ENCODE measurements at regions of chr9 and their contacts with region 1.

Region 1: DNA sequence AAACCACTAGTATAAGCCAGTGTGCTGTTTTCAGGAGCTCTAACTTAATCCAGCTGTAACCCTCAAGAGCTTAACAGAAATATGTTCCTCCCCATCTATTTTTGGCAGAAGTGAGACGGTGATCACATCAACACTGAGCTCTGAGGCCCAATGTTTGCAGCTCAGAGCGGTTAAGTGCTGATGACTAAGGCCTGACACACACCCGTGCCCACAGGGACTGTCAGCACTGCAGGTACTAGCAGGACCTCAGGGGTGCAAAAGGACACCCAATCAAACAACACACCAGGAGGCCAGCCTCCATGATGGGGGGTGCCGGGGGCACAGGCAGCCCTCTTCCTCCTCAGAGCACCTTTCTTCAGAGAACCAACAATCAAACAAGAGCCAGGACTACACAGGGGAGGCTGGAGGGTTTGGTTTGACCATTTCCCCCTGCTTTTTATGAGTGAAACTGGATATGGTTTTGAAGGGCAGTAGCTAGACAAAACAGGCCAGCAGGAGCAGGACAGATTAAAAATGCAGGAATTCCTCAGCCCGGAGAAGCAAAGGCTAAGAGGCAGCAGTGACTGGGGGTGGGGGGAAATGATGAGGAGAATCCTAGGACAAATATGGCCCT is 61.3 kb downstream of the RAPGEF1 start:
- DNase-seq: peak; percentile 89
- H3K4me3 Mint-ChIP-seq: peak overlapping the region; percentile 46
- H3K27ac Mint-ChIP-seq: peak overlapping the region; percentile 95
- H3K4me1 Mint-ChIP-seq: peaks cover 86% of the 10 kb centered on the region
- H3K27me3 Mint-ChIP-seq: no peaks in the 10 kb centered on the region

Region 2: DNA sequence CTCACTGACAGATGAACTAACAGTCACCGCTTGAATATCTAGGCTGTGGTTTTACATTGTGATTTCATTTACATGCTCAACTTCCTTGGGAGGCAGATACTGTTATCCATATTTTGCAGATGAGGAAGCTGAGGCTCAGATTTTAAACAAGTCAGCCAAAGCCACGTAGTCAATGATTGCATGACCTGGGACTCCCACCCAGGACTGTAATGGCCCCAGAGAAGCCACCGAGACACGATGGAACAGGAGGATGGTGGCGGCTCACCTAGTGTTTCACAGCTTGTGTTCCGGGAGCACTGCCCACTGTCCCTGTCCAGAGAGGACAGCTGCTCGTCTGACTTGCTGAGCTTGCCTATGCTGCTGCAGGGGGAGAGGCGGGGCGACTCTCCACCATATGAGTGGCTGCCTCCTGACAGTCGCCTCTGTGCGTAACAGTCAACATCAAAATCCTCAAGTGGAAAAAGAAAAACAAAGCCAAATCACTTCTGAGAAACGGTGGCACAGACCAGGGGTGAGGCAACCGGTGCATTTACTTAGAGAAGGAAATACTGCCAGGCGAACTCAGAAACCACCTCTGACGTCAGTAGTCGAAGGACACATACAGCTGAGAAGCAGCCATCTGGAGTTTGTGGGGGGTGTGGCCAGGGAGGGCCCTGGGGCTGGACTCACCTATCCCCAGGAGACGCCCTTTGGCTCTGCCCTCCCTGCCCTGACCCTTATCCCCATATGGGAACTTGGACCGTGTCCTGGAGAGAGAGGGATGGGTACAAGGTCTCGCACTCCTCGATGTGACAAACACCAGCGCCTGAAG is 50.8 kb before region 1 on chr9:
- CTCF ChIA-PET with region 1: interaction called, 3 read pairs
- POLR2A ChIA-PET with region 1: interaction called, 27 read pairs
- DNase-seq: peak; percentile 71
- H3K4me3 Mint-ChIP-seq: peak overlapping the region; percentile 14
- H3K27ac Mint-ChIP-seq: peak overlapping the region; percentile 88
- H3K4me1 Mint-ChIP-seq: peaks cover 67% of the 10 kb centered on the region
- H3K27me3 Mint-ChIP-seq: no peaks in the 10 kb centered on the region

Region 3: DNA sequence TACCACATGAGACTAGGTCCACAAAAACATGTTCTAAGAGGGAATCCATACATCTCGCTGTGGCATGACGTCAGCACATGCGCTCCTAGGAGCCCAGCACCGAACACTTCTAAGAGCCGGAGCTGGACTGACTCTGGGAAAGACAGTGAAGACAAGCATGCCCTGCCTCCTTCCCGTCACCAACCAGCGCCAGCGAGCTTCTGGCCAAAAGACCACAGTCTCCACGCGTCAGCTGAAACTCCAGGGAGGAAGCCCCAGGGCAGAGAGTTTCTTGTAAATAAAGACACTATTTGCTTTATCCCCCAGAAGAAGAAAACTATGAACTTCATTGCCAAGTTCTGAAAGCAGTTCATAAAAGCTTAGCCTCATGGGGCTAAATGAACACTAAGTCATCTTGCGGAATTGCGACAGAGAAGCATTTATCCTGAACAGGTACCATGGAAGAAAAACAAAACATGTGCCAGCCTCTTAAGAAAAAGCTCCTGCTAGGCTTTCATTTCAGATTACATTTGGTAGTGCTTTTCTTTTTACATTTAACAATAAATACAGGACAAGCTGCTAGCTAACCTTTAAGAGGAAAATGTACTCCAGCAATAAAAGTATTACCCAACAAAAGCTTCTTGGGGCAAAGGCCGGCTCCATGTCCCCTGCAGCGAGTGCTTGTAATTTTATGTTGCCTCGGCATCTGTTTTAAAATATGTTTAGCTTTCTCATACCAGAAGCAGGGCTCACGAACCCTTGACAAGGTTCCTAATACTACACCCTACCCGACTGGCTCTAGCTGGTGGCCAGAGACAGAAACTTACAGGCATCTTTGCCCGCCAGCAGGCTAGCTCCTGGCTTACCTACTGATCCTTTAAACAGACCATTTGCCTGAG is 36.7 kb before region 1 on chr9:
- CTCF ChIA-PET with region 1: interaction called, 6 read pairs
- POLR2A ChIA-PET with region 1: interaction called, 29 read pairs
- DNase-seq: no peak
- H3K4me3 Mint-ChIP-seq: no peak overlapping the region
- H3K27ac Mint-ChIP-seq: peak overlapping the region; percentile 85
- H3K4me1 Mint-ChIP-seq: peaks cover 60% of the 10 kb centered on the region
- H3K27me3 Mint-ChIP-seq: no peaks in the 10 kb centered on the region

Region 4: GRCh38 chr9:131697097-131697496 is 18.5 kb after region 1 on chr9:
- CTCF ChIA-PET with region 1: interaction called, 14 read pairs
- POLR2A ChIA-PET with region 1: interaction called, 70 read pairs
- DNase-seq: no peak
- H3K4me3 Mint-ChIP-seq: no peak overlapping the region
- H3K27ac Mint-ChIP-seq: no peak overlapping the region
- H3K4me1 Mint-ChIP-seq: peaks cover 69% of the 10 kb centered on the region
- H3K27me3 Mint-ChIP-seq: no peaks in the 10 kb centered on the region

Region 5: DNA sequence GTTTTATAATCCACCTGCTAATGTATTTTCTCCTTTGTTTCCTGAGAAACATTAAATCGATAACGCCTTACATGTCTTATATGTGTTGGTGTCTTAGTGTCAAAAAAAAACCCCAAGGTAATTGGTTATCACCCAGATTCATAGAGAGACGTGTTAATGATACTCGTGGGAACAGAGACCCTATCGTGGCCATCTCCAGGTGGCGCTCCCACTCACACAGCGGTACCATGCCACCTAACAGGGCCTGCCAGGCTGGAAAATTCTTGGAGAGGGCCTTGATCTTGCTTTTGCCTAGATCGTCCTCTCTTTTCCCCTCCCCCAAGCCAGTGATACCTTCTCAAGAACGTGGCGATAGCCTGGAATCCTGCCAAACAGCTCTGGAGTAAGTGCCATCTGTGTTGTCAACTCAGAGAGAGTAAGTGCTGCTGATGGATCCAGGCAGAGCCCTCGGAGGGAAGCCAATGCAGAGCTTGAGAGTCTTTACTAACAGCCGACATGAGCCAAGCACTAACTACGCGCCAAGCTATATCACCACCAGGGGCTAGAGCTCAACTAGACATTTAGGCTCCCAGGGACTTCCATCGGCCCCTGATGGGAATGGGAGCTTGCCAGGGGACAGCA is 43.5 kb after region 1 on chr9:
- CTCF ChIA-PET with region 1: interaction called, 87 read pairs
- POLR2A ChIA-PET with region 1: interaction called, 362 read pairs
- DNase-seq: no peak
- H3K4me3 Mint-ChIP-seq: no peak overlapping the region
- H3K27ac Mint-ChIP-seq: no peak overlapping the region
- H3K4me1 Mint-ChIP-seq: peaks cover 82% of the 10 kb centered on the region
- H3K27me3 Mint-ChIP-seq: no peaks in the 10 kb centered on the region

Region 6: DNA sequence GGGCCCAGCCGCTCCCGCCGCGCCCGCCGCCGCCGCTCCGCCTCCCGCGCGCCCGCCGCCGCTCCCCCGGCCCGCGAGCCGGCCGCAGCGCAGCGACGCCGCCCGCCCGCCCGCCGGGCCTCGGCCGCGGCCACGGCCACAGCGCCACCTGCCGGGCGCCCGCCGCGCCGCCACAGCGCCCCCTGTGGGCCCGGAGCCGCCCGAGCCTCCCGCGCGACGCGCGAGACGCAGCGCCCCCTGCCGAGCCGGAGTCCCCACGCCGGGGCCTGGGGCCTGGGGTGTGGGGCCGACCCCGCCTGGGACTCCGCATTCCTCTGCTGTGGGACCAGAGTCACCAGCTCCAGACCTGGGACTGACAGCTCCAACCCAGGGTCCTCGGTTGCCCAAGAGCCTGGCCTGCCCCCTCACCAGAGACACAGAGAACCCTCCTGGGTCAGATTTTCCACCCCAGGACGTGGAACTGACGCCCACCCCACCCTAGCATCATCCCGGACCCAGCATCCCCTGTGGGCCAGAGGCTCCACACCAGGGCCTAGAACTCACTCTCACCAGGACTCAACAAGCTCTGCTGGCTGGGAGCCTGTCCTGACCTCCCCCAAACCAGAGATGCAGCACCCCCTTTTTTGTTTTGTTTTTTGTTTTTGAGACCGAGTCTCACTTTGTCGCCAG is 61.5 kb after region 1 on chr9 and contains the start of gene RAPGEF1:
- CTCF ChIA-PET with region 1: interaction called, 78 read pairs
- POLR2A ChIA-PET with region 1: interaction called, 91 read pairs
- DNase-seq: peak; percentile 85
- H3K4me3 Mint-ChIP-seq: peak within 1 kb of the TSS; percentile 97
- H3K27ac Mint-ChIP-seq: peak within 1 kb of the TSS; percentile 92
- H3K4me1 Mint-ChIP-seq: peaks cover 59% of the 10 kb centered on the region
- H3K27me3 Mint-ChIP-seq: no peaks in the 10 kb centered on the region
- total RNA-seq, gene RAPGEF1: 149 to 158 TPM

Measured in activated CD4-positive, alpha-beta memory T cell treated with anti-CD3 and anti-CD28 coated beads, Interleukin-2, amount 10 ng/mL, durations not matched to agents 7 days and 5 days (primary cell).